Posterior cingulate gyrus (tissue), 11 donors: ENCODE measurements at regions of chr1 and their contacts with region 1.

Region 1: DNA sequence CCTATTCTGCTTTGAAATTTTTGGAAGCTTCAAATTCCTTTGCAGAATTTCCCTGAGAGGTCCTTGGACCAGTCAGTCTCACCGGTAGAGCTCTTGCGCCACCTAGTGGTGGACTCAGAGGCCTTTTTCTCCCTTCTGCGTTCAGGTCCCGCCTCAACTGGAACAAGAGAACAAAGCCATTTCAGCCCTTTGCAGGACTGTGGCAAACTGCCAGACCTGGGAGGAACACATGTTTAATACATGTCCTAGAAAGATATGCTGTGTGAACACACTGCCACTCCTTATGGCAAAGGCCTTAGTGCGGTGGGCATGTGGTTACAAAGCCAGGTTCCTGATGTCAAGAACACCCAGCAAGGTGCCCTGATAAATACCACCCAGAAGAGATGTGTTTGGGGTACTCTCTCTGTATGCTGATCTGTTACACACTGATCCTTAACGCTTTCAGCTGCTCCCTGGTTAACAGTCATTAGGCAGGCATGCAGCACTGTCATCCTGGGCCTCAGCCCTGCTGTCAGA is 82.2 kb upstream of the SSX2IP start:
- DNase-seq: peak; percentile 66 to 96 (median 90)

Region 2: DNA sequence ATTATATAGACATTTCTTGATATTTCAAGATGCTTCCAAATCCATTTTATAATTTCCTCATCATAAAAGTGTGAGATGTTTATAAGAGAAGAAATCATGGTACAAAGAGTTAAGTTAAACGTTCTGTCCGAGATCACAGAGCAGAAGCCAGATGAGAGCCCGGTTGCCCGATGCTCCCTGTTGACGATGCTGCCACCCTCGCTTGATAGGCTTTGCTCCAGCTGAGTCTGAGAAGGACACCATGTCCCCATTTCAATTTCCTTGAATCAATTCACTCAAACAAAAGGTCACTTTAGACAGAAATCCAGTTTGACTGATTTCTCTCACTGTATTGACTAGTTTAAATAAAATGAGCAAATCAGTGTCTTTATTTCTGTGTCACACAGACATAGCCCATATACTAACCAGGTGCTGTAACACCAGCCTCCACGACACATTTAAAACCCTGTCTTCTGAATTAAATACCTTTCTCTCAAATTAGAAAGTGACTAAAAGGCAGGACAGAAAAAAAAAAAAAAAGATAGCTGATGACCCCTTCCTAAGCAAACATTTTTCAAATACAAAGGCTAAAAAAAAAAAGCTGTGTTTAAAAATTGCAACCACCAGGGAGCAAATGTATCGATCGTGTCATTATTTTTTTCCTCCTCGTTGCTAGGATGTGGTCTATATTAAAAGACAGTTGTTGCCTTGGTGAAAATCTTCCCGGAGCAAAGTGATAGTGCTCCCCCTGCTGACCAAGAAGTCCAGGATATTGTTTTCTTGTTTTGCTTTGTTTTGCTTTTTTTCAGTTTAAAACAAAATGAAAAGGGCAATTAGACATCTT is 339.0 kb before region 1 on chr1:
- intact Hi-C with region 1: loop called (anchors 5 kb)
- DNase-seq: peak in 8 of 10 donors; percentile 33 to 87 (median 61)

Region 3: DNA sequence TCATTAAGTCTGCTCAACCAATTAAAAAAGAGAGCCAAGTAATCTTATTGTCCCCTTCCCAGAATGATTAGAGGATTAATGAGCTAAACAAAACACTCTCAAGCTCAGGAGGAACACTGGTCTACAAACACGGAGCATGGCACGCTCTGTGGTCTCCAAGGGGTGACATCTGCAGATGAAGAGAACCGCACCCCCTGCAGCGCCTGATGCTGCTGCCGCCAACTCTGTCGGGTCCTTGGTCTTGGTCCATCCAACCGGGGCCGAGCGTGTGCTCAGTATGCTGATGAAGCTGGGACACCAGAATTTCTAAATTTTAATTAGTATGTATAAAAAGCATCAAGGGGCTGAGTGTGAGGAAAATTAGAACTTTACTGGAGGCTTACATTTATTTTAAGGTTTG is 37.9 kb after region 1 on chr1:
- intact Hi-C with region 1: no loop called
- DNase-seq: peak in 6 of 10 donors; percentile 7 to 82 (median 50)

Region 4: GRCh38 chr1:84936116-84936810 is 163.8 kb after region 1 on chr1:
- intact Hi-C with region 1: loop called (anchors 10 kb)
- DNase-seq: peak in 1 of 10 donors; percentile 21